CD4-positive, alpha-beta memory T cell (primary cell): ENCODE measurements at regions of chr21 and their contacts with region 1.

Region 1: GRCh38 chr21:44873356-44874239 is at the start of gene PTTG1IP:
- DNase-seq: peak; percentile 98 to 99 (median 99)
- H3K4me3 ChIP-seq: peak within 1 kb of the TSS; percentile 67 to 70
- H3K4me3 Mint-ChIP-seq: peak within 1 kb of the TSS; percentile 92 to 97 (median 95)
- H3K27ac ChIP-seq: peak within 1 kb of the TSS; percentile 76
- H3K27ac Mint-ChIP-seq: peak within 1 kb of the TSS; percentile 92 to 98 (median 97)
- H3K4me1 ChIP-seq: peaks cover 55% of the 10 kb centered on the region
- H3K4me1 Mint-ChIP-seq: peaks cover 37 to 59% (median 48%) of the 10 kb centered on the region in 4 donors
- H3K27me3 ChIP-seq: no peaks in the 10 kb centered on the region
- H3K27me3 Mint-ChIP-seq: no peaks in the 10 kb centered on the region
- total RNA-seq, gene PTTG1IP: 98.7 to 110 TPM

Region 2: GRCh38 chr21:44817506-44817880 is 56.1 kb before region 1 on chr21:
- CTCF ChIA-PET with region 1: no interaction called
- POLR2A ChIA-PET with region 1: interaction called, 52 read pairs
- intact Hi-C with region 1: loop called (anchors 1 kb)
- DNase-seq: peak; percentile 89 to 91 (median 91)
- H3K4me3 ChIP-seq: peak overlapping the region in 1 of 2 donors; percentile 57
- H3K4me3 Mint-ChIP-seq: peak overlapping the region; percentile 23 to 80 (median 58)
- H3K27ac ChIP-seq: no peak overlapping the region
- H3K27ac Mint-ChIP-seq: peak overlapping the region in 3 of 7 donors; percentile 17 to 48 (median 31)
- H3K4me1 ChIP-seq: peaks cover 16% of the 10 kb centered on the region
- H3K4me1 Mint-ChIP-seq: peaks cover 1 to 34% (median 16%) of the 10 kb centered on the region in 4 donors
- H3K27me3 ChIP-seq: no peaks in the 10 kb centered on the region
- H3K27me3 Mint-ChIP-seq: no peaks in the 10 kb centered on the region

Region 3: DNA sequence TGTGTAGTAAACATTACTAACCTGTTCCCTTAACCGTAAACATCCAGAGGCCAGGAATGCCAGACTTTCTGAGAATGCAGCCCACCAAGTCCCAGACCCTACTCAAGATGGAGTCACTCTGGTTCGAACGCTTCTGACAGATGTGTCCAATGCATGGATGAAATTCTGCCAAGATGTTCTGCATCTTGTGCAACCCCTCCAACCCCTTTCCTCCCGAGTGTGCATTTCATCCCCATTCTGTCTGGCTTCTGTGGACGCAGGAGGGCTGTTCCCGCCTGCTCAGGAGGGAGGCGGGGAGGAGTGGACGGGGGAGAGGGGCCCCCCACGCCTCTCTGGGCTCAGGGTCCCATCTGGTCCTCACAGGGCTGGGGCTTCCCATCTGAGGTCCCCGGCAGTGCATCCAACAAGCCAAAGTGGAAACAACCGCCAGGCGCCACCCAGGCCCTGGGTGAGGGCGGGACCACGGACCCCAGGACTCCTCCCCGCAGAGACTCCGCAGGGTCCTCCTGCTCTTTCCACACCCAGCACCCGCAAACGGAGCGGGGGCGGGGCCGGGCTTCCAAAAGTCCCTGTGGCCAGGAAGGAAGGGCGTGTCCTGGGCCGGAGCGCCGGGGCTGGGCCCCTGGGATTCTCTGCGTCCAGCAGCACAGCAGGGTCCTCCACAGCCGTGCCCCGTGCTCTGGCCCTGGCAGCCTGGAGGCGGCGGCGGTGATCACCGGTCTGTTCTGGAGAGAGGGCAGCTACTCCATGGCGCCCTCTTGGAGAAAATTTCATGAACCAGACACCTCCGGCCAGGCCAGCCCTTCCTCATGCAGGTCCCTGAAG is 28.0 kb before region 1 on chr21:
- CTCF ChIA-PET with region 1: interaction called, 5 read pairs
- POLR2A ChIA-PET with region 1: interaction called, 9 read pairs
- intact Hi-C with region 1: loop called (anchors 2 kb)
- DNase-seq: peak; percentile 19 to 66 (median 33)
- H3K4me3 ChIP-seq: peak overlapping the region; percentile 14 to 25
- H3K4me3 Mint-ChIP-seq: peak overlapping the region; percentile 48 to 83 (median 70)
- H3K27ac ChIP-seq: peak overlapping the region; percentile 19
- H3K27ac Mint-ChIP-seq: peak overlapping the region in 4 of 7 donors; percentile 42 to 72 (median 58)
- H3K4me1 ChIP-seq: peaks cover 19% of the 10 kb centered on the region
- H3K4me1 Mint-ChIP-seq: peaks cover 6 to 24% (median 15%) of the 10 kb centered on the region in 4 donors
- H3K27me3 ChIP-seq: no peaks in the 10 kb centered on the region
- H3K27me3 Mint-ChIP-seq: peaks cover 5% of the 10 kb centered on the region in 2 donors

Region 4: DNA sequence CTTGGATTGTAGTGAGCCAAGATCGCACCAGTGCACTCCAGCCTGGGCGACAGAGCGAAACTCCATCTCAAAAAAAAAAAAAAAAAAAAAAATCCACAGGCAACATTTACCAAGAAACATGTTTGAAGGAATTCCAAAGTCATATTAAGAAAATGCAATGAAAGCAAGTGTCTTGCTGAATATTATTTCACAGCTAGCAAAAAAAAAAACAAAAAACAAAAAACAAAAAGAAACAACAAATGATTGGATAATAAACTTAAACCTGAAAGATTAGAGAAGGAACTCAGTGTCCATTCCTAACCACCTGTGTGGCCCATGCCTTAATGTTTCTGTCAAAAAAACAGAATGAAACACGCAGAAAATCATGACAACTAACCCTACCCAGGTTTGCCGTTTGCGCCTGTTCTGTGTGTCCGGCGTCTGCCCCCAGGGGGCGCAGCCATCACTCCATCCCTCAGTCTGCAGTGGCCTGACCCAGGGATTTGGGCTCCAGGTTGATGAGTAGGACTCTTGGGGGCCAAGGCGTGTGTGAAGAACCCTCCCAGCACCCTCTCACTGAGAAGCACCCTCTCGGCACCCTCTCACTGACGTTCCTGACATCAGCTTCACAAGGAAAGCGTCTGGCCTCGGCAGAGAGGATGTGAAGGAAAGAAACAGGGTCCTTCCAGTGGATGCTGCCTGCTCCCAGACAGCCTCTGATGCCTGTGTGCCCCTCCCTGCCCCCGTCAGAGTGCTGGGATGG is 19.1 kb after region 1 on chr21:
- CTCF ChIA-PET with region 1: interaction called, 15 read pairs
- POLR2A ChIA-PET with region 1: interaction called, 25 read pairs
- intact Hi-C with region 1: loop called (anchors 1 kb)
- DNase-seq: peak; percentile 64 to 80 (median 76)
- H3K4me3 ChIP-seq: no peak overlapping the region
- H3K4me3 Mint-ChIP-seq: peak overlapping the region in 1 of 8 donors; percentile 35
- H3K27ac ChIP-seq: no peak overlapping the region
- H3K27ac Mint-ChIP-seq: peak overlapping the region in 6 of 7 donors; percentile 64 to 92 (median 85)
- H3K4me1 ChIP-seq: peaks cover 19% of the 10 kb centered on the region
- H3K4me1 Mint-ChIP-seq: peaks cover 10 to 29% (median 14%) of the 10 kb centered on the region in 4 donors
- H3K27me3 ChIP-seq: no peaks in the 10 kb centered on the region
- H3K27me3 Mint-ChIP-seq: no peaks in the 10 kb centered on the region

Region 5: GRCh38 chr21:44911389-44912157 is 38.0 kb after region 1 on chr21:
- CTCF ChIA-PET with region 1: interaction called, 3 read pairs
- POLR2A ChIA-PET with region 1: interaction called, 58 read pairs
- intact Hi-C with region 1: loop called (anchors 5 kb)
- DNase-seq: peak; percentile 72 to 80 (median 79)
- H3K4me3 ChIP-seq: peak overlapping the region; percentile 42 to 43
- H3K4me3 Mint-ChIP-seq: peak overlapping the region; percentile 63 to 90 (median 83)
- H3K27ac ChIP-seq: peak overlapping the region; percentile 61
- H3K27ac Mint-ChIP-seq: peak overlapping the region; percentile 88 to 98 (median 94)
- H3K4me1 ChIP-seq: peaks cover 92% of the 10 kb centered on the region
- H3K4me1 Mint-ChIP-seq: peaks cover 35 to 80% (median 54%) of the 10 kb centered on the region in 4 donors
- H3K27me3 ChIP-seq: no peaks in the 10 kb centered on the region
- H3K27me3 Mint-ChIP-seq: no peaks in the 10 kb centered on the region

Region 6: GRCh38 chr21:44920694-44921604 is 47.4 kb after region 1 on chr21 and contains the start of gene ITGB2:
- CTCF ChIA-PET with region 1: interaction called, 4 read pairs
- POLR2A ChIA-PET with region 1: interaction called, 173 read pairs
- intact Hi-C with region 1: no loop called
- DNase-seq: peak; percentile 48 to 74 (median 55)
- H3K4me3 ChIP-seq: peak within 1 kb of the TSS; percentile 94 to 98
- H3K4me3 Mint-ChIP-seq: peak within 1 kb of the TSS; percentile 95 to 100 (median 100)
- H3K27ac ChIP-seq: peak within 1 kb of the TSS; percentile 75
- H3K27ac Mint-ChIP-seq: peak within 1 kb of the TSS; percentile 93 to 98 (median 97)
- H3K4me1 ChIP-seq: peaks cover 76% of the 10 kb centered on the region
- H3K4me1 Mint-ChIP-seq: peaks cover 49 to 90% (median 67%) of the 10 kb centered on the region in 4 donors
- H3K27me3 ChIP-seq: no peaks in the 10 kb centered on the region
- H3K27me3 Mint-ChIP-seq: no peaks in the 10 kb centered on the region
- total RNA-seq, gene ITGB2: 278 to 291 TPM

Region 7: GRCh38 chr21:44939532-44940115 is 66.0 kb after region 1 on chr21 and contains the start of gene SLX9:
- CTCF ChIA-PET with region 1: interaction called, 13 read pairs
- POLR2A ChIA-PET with region 1: interaction called, 173 read pairs
- intact Hi-C with region 1: no loop called
- DNase-seq: peak; percentile 69 to 82 (median 76)
- H3K4me3 ChIP-seq: peak within 1 kb of the TSS; percentile 36 to 57
- H3K4me3 Mint-ChIP-seq: peak within 1 kb of the TSS; percentile 86 to 97 (median 90)
- H3K27ac ChIP-seq: peak within 1 kb of the TSS; percentile 46
- H3K27ac Mint-ChIP-seq: peak within 1 kb of the TSS; percentile 53 to 96 (median 88)
- H3K4me1 ChIP-seq: peaks cover 38% of the 10 kb centered on the region
- H3K4me1 Mint-ChIP-seq: peaks cover 23 to 56% (median 40%) of the 10 kb centered on the region in 4 donors
- H3K27me3 ChIP-seq: no peaks in the 10 kb centered on the region
- H3K27me3 Mint-ChIP-seq: no peaks in the 10 kb centered on the region
- total RNA-seq, gene SLX9: 17.7 to 21.6 TPM